ENCODE measurements at regions of chr20 and their contacts with region 1.

Region 1: DNA sequence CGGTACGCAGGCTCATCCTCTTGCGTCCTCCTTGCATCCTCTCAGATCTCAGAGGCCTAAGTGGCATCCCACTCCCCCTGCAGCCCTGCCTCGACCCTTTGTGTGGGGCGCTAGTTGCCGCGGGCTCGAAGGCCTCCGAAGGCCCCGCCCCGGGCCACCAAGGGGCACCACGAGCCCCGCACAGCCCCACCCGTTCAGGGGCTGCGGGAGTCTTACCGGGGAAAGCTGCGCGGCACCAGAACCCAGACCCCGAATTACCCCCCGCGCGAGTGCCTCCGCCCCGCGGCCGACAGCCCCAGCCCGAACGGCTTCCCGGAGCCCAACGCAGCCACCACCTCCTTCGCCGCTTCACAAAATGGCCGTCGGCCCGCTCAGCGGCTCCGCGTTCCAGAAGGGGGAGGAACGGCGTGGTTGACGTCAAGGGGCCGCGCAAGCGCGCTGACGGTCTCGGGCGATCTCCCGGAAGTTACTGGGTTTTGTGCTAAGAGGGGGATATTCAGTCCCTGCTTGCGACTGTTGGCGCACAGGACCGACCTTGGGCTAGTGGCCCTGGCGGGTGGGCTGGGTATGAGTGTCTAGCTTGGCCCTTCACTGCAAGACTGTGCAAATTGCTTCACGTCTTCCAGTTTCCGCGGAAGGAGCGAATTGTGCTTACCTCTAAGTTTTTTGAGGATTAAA is at the starts of genes CPNE1 and RBM12:
- DNase-seq: peak; percentile 87 to 97 (median 92)
- ATAC-seq: peak; percentile 67
- H3K4me3 ChIP-seq: peak within 1 kb of the TSS; percentile 97
- H3K4me3 Mint-ChIP-seq: peak within 1 kb of the TSS; percentile 89
- H3K27ac ChIP-seq: peak within 1 kb of the TSS; percentile 99
- H3K27ac Mint-ChIP-seq: peak within 1 kb of the TSS; percentile 99
- H3K4me1 ChIP-seq: peaks cover 37% of the 10 kb centered on the region
- H3K4me1 Mint-ChIP-seq: peaks cover 49% of the 10 kb centered on the region
- H3K27me3 ChIP-seq: no peaks in the 10 kb centered on the region
- H3K27me3 Mint-ChIP-seq: no peaks in the 10 kb centered on the region
- CTCF ChIP-seq: no peak
- total RNA-seq, gene CPNE1: 146 to 153 TPM
- total RNA-seq, gene RBM12: 91.7 to 95.2 TPM

Region 2: DNA sequence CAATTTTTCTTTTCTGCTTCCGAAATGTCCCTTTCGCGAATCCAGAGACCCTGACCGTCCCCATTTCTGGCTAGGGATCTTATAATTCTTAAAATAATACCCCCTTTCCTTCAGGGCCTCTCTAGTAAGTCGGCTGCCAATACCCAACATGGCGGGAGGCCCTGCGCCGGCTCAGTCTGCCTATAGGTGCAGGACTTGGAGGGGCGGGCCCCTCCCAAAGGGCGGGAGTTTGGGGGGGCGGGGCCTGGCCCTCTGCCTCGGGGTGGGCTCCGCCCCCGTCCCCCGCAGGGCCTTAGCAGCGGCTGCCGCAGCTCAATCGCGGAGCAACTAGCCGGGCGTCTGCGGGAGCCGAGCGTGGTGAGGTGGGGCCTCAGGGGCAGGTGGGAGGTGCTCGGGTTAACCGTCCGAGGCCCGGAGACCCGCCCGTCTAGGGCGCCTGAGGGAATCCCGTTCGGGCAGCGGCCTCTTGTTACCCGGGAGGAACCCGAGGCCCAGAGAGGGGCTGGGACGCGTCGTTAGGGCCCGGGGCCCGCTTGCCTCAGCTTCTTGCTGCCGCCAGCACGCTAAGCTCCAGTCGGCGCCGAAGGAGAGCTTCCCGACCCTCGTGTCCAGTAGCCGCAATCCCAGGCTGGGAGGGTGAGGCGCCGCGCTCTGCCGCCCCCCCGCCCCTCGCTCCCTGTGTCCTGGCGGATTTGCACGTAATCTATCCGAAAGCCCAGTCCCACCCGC is 209.6 kb before region 1 on chr20 and contains the start of gene CEP250:
- CTCF ChIA-PET with region 1: no interaction called
- POLR2A ChIA-PET with region 1: interaction called, 12 read pairs
- intact Hi-C with region 1: no loop called
- DNase-seq: peak; percentile 87 to 97 (median 94)
- ATAC-seq: peak; percentile 96
- H3K4me3 ChIP-seq: peak within 1 kb of the TSS; percentile 91
- H3K4me3 Mint-ChIP-seq: peak within 1 kb of the TSS; percentile 97
- H3K27ac ChIP-seq: peak within 1 kb of the TSS; percentile 83 to 94
- H3K27ac Mint-ChIP-seq: peak within 1 kb of the TSS; percentile 87
- H3K4me1 ChIP-seq: peaks cover 19% of the 10 kb centered on the region
- H3K4me1 Mint-ChIP-seq: peaks cover 29% of the 10 kb centered on the region
- H3K27me3 ChIP-seq: no peaks in the 10 kb centered on the region
- H3K27me3 Mint-ChIP-seq: no peaks in the 10 kb centered on the region
- CTCF ChIP-seq: no peak
- total RNA-seq, gene CEP250: 27.6 to 33.1 TPM

Region 3: GRCh38 chr20:35490736-35491181 is 173.9 kb before region 1 on chr20:
- CTCF ChIA-PET with region 1: no interaction called
- POLR2A ChIA-PET with region 1: interaction called, 8 read pairs
- intact Hi-C with region 1: loop called in 1 of 2 experiments (anchors 5 kb)
- DNase-seq: peak; percentile 41 to 89 (median 59)
- ATAC-seq: peak; percentile 99
- H3K4me3 ChIP-seq: peak overlapping the region; percentile 94
- H3K4me3 Mint-ChIP-seq: peak overlapping the region; percentile 100
- H3K27ac ChIP-seq: peak overlapping the region; percentile 63 to 87
- H3K27ac Mint-ChIP-seq: peak overlapping the region; percentile 98
- H3K4me1 ChIP-seq: peaks cover 59% of the 10 kb centered on the region
- H3K4me1 Mint-ChIP-seq: peaks cover 72% of the 10 kb centered on the region
- H3K27me3 ChIP-seq: no peaks in the 10 kb centered on the region
- H3K27me3 Mint-ChIP-seq: no peaks in the 10 kb centered on the region
- CTCF ChIP-seq: no peak

Region 4: DNA sequence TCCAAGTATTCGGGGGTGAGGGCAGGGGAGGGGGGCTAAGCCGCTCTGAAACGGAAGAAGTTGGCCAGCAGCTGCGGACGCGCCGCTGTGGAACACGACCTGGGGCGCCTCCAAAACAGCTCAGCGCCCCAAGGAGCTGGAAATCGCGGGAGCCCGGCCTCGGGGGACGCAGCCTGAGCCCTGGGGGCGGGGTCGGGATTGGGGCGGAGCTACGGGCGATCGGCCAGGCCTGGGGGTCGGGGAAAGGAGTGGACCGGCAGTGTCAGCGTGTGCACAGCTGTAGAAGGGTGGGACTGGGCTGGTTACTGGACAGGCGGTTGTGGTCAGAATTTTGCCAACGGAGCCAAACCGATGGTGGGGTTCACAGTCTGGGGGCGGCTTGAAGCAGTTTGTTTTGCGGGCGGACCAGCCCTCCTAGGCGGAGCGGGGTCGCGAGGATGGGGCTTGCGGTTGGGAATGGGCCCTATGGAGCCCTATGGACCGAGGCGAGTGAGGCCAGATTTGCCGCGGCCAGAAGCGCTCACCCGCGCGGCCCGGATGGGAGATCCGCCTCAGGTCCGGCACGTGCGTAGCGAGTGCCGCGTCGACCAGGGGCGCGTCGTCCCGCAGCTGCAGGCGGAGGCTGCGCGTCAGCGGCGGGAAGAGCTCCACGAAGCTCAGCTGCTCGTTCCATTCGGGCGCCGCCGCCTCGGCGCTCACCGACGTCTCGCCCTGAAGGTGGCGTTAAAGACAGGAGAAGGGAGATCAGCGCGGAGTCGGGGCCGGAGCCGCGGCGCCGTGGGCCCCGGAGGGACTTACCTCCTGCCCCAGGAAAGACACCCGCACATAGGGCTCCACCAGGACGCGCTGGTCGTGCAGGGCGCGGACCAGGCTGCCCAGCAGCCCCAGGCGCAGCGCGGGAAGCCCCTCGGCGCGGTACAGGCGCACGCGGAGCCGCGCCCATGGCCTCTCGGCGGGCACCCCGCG is 63.4 kb before region 1 on chr20:
- CTCF ChIA-PET with region 1: interaction called, 10 read pairs
- POLR2A ChIA-PET with region 1: interaction called, 15 read pairs
- intact Hi-C with region 1: loop called (anchors 5 kb)
- DNase-seq: peak; percentile 65 to 92 (median 76)
- ATAC-seq: peak; percentile 95
- H3K4me3 ChIP-seq: peak overlapping the region; percentile 58
- H3K4me3 Mint-ChIP-seq: peak overlapping the region; percentile 77
- H3K27ac ChIP-seq: no peak overlapping the region
- H3K27ac Mint-ChIP-seq: no peak overlapping the region
- H3K4me1 ChIP-seq: peaks cover 19% of the 10 kb centered on the region
- H3K4me1 Mint-ChIP-seq: peaks cover 14% of the 10 kb centered on the region
- H3K27me3 ChIP-seq: peaks cover 9 to 15% of the 10 kb centered on the region in 2 experiments
- H3K27me3 Mint-ChIP-seq: peaks cover 22% of the 10 kb centered on the region
- CTCF ChIP-seq: peak; percentile 64

Region 5: DNA sequence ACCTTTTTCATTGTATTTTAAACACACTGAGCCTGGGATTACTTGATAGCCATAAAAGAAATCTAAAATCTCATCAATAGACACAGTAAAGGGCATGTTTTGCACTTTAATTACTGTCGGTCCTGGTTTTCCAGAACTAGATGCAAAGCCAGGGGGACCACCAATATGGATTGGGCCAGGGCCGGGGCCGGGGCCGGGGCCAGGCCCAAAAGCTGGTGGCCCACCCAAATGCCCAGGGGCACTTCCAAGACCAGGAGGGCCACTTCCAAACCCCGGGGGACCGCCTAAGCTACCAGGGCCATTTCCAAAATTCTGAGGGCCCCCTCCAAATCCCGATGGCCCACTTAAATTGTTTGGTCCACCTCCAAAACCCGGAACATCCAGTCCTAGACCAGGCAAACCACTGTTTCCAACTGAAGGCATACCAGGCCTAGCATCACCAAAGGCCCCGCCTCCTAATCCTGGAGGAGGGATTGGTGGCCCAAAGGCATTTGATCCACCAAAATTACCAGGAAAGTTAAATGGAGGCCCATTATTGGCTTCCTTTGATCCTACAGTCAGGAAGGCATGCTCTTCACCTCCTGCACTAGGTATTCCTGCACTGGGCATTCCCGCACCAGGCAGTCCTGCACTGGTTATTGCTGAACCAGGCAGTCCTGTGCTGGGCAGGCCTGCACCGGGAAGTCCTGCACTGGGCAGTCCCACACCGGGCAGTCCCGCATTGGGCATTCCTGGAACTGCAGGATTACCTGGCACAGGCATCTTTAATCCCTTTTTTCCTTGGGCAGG is 11.8 kb before region 1 on chr20:
- CTCF ChIA-PET with region 1: interaction called, 4 read pairs
- POLR2A ChIA-PET with region 1: interaction called, 15 read pairs
- intact Hi-C with region 1: no loop called
- DNase-seq: no peak
- ATAC-seq: no peak
- H3K4me3 ChIP-seq: no peak overlapping the region
- H3K4me3 Mint-ChIP-seq: no peak overlapping the region
- H3K27ac ChIP-seq: no peak overlapping the region
- H3K27ac Mint-ChIP-seq: peak overlapping the region; percentile 40
- H3K4me1 ChIP-seq: peaks cover 21% of the 10 kb centered on the region
- H3K4me1 Mint-ChIP-seq: peaks cover 58% of the 10 kb centered on the region
- H3K27me3 ChIP-seq: no peaks in the 10 kb centered on the region
- H3K27me3 Mint-ChIP-seq: no peaks in the 10 kb centered on the region
- CTCF ChIP-seq: no peak

Region 6: GRCh38 chr20:35757098-35757705 is 92.5 kb after region 1 on chr20:
- CTCF ChIA-PET with region 1: no interaction called
- POLR2A ChIA-PET with region 1: no interaction called
- intact Hi-C with region 1: no loop called
- DNase-seq: no peak
- ATAC-seq: peak; percentile 52
- H3K4me3 ChIP-seq: no peak overlapping the region
- H3K4me3 Mint-ChIP-seq: no peak overlapping the region
- H3K27ac ChIP-seq: no peak overlapping the region
- H3K27ac Mint-ChIP-seq: no peak overlapping the region
- H3K4me1 ChIP-seq: peaks cover 3% of the 10 kb centered on the region
- H3K4me1 Mint-ChIP-seq: peaks cover 9% of the 10 kb centered on the region
- H3K27me3 ChIP-seq: no peaks in the 10 kb centered on the region
- H3K27me3 Mint-ChIP-seq: no peaks in the 10 kb centered on the region
- CTCF ChIP-seq: no peak

Region 7: DNA sequence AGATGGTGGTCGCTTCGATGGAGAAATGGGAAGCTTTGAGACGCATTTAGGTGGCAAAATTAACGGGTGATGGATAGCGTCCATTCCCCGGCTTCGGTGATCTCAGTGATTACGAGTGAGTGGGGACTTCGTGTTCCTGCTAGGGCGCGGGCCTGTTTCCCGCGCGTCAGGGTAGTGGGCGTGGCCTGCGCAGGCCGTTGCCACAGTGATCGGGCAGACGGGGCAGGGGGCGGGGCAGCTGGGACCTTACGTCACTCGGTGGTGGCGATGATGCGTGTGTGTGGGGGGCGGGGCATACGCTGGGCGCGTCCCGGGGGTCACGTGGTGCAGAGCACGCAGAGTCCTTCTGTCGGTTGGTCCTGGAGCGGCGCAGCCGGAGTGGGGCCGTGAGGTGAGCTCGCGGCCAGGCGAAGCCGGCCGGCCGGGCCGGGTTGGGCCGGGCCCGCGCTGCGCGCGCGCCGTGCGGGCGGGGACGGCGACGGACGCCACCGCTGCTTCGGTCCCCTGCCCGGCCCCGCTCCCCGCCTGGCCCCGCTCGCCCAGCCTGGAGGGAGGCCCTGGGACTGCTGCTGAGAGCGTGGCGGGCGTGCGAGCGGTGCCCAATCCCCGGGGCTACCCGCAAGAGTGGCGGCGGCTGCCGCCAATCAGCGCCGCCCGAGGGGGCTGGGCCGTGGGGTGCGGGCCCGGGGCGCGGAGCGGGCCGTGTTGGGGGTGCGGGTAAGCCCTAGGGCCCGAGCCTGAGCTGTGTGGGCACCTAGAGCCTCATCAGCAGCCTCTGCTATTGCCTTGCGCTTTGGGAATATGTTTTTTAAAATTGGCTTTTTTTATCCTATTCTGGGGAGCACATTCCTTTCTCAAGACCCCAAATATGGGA is 107.2 kb after region 1 on chr20 and contains the start of gene PHF20:
- CTCF ChIA-PET with region 1: no interaction called
- POLR2A ChIA-PET with region 1: interaction called, 15 read pairs
- intact Hi-C with region 1: no loop called
- DNase-seq: peak; percentile 100
- ATAC-seq: peak; percentile 84
- H3K4me3 ChIP-seq: peak within 1 kb of the TSS; percentile 79
- H3K4me3 Mint-ChIP-seq: peak within 1 kb of the TSS; percentile 97
- H3K27ac ChIP-seq: peak within 1 kb of the TSS; percentile 86 to 96
- H3K27ac Mint-ChIP-seq: peak within 1 kb of the TSS; percentile 96
- H3K4me1 ChIP-seq: peaks cover 84% of the 10 kb centered on the region
- H3K4me1 Mint-ChIP-seq: peaks cover 75% of the 10 kb centered on the region
- H3K27me3 ChIP-seq: no peaks in the 10 kb centered on the region
- H3K27me3 Mint-ChIP-seq: no peaks in the 10 kb centered on the region
- CTCF ChIP-seq: no peak
- total RNA-seq, gene PHF20: 119 to 126 TPM

Measured in CD4-positive, alpha-beta T cell (primary cell).